ENCODE measurements at regions of chr10 and their contacts with region 1.

Region 1: DNA sequence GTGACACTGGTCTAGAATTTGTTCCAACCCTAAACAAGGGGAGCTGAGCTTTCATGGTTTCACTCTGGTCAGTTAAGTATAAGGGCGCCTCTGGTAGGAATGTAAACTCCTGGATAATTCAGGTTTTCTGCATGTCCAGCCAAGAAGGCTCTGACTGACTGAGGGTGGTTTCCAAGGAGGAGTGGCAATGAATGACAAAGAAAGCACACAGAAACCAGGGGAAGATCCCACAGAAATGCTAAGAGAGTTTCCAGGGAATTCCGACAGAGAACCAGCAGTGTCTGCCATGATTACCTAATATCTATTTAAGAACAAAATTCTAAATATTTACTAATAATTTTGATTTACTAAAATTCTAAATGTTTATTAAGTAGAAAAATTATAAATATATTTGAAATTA is 27.3 kb upstream of the NRG3 start:
- DNase-seq: no peak
- H3K4me3 Mint-ChIP-seq: no peak overlapping the region
- H3K27ac Mint-ChIP-seq: no peak overlapping the region
- H3K4me1 Mint-ChIP-seq: no peaks in the 10 kb centered on the region
- H3K27me3 Mint-ChIP-seq: no peaks in the 10 kb centered on the region
- CTCF ChIP-seq: no peak

Region 2: GRCh38 chr10:81884856-81885255 is 37.2 kb after region 1 on chr10:
- CTCF ChIA-PET with region 1: no interaction called
- POLR2A ChIA-PET with region 1: no interaction called
- intact Hi-C with region 1: loop called (anchors 2 kb)
- DNase-seq: no peak
- H3K4me3 Mint-ChIP-seq: no peak overlapping the region
- H3K27ac Mint-ChIP-seq: no peak overlapping the region
- H3K4me1 Mint-ChIP-seq: peaks cover 11% of the 10 kb centered on the region
- H3K27me3 Mint-ChIP-seq: no peaks in the 10 kb centered on the region
- CTCF ChIP-seq: no peak

Region 3: DNA sequence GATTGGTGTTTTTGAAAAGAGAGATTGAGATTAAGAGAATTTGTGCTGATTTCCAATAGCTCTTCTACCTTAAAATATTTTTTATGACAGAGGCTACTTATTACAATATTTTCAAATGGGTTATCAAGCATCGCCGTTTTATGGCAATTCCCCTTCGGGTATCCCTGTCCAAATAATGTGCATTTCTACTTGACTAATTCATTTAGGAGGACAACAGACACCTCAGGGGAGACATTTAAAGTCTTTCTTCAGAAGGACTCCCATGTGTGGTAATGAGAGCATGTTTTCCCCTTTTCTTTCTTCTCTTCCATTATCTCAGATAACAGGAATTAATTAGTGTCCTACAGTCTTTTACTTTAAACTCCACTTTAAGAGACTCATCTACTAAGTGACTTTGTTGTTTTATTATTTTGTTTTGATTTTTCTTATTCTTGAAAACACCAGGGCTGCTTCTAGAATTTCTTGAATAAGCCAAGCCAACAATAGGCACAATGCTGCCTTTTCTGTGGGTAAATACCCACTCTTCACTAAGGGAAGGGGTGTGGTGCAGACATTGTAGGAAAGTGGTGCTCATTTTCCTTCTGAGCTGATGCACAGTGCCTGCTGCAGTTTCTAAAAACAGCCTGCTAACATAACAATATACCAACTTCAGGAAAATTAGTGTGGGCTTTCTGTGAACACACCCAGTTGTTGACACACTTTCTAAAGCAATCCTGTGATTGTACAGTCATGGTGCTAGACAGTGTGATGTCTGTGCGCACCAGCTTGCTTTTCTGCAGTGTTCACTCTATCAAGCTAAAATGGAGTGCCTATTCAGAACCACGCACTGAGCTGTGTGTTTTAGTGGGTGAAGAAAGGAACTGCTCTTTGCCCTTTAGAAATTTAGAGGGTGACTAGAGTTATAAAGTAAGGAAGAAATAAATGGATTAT is 625.0 kb after region 1 on chr10:
- CTCF ChIA-PET with region 1: no interaction called
- POLR2A ChIA-PET with region 1: no interaction called
- intact Hi-C with region 1: no loop called
- DNase-seq: no peak
- H3K4me3 Mint-ChIP-seq: no peak overlapping the region
- H3K27ac Mint-ChIP-seq: no peak overlapping the region
- H3K4me1 Mint-ChIP-seq: no peaks in the 10 kb centered on the region
- H3K27me3 Mint-ChIP-seq: no peaks in the 10 kb centered on the region
- CTCF ChIP-seq: no peak

Measured in MCF 10A (cell line).